ENCODE measurements at regions of chr7 and their contacts with region 1.

Region 1: GRCh38 chr7:111987115-111987826 is 218.9 kb downstream of the DOCK4 start:
- DNase-seq: peak; percentile 83
- H3K4me3 ChIP-seq: peak overlapping the region in 1 of 3 experiments; percentile 45
- H3K27ac ChIP-seq: peak overlapping the region; percentile 89
- H3K4me1 ChIP-seq: peaks cover 30% of the 10 kb centered on the region
- H3K27me3 ChIP-seq: no peaks in the 10 kb centered on the region
- CTCF ChIP-seq: no peak
- POLR2A ChIP-seq: no peak

Region 2: GRCh38 chr7:111903797-111904196 is 83.5 kb before region 1 on chr7:
- CTCF ChIA-PET with region 1: no interaction called
- POLR2A ChIA-PET with region 1: no interaction called
- dilution Hi-C with region 1: no loop called
- intact Hi-C with region 1: no loop called
- DNase-seq: no peak
- H3K4me3 ChIP-seq: no peak overlapping the region
- H3K27ac ChIP-seq: no peak overlapping the region
- H3K4me1 ChIP-seq: no peaks in the 10 kb centered on the region
- H3K27me3 ChIP-seq: no peaks in the 10 kb centered on the region
- CTCF ChIP-seq: no peak
- POLR2A ChIP-seq: no peak

Region 3: GRCh38 chr7:112162142-112163020 is 175.1 kb after region 1 on chr7:
- CTCF ChIA-PET with region 1: no interaction called
- POLR2A ChIA-PET with region 1: no interaction called
- dilution Hi-C with region 1: no loop called
- intact Hi-C with region 1: loop called (anchors 1 kb)
- DNase-seq: peak; percentile 98
- H3K4me3 ChIP-seq: peak overlapping the region in 1 of 3 experiments; percentile 13
- H3K27ac ChIP-seq: peak overlapping the region; percentile 81
- H3K4me1 ChIP-seq: peaks cover 70% of the 10 kb centered on the region
- H3K27me3 ChIP-seq: no peaks in the 10 kb centered on the region
- CTCF ChIP-seq: no peak
- POLR2A ChIP-seq: no peak

Region 4: DNA sequence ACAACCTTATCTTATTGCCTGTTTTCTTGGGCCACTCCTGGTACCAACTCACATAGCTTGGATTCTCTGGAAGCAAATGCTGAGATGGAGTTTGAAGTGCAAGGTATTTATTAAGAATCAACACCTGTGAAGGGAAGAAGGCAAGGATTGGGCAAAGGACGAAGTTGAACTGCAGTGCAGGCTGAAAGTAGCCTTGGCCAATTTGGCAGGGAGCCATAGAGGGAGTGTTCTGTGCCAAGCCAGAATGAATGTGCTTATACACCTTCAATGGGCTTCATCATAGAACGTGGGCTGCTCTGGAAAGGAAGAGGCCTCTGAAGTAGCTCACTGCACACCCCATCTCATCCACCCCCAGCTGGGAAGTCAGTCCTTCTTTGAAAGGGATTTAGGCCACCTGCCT is 383.2 kb after region 1 on chr7:
- CTCF ChIA-PET with region 1: no interaction called
- POLR2A ChIA-PET with region 1: no interaction called
- dilution Hi-C with region 1: no loop called
- intact Hi-C with region 1: no loop called
- DNase-seq: peak; percentile 11
- H3K4me3 ChIP-seq: no peak overlapping the region
- H3K27ac ChIP-seq: no peak overlapping the region
- H3K4me1 ChIP-seq: no peaks in the 10 kb centered on the region
- H3K27me3 ChIP-seq: peaks cover 3 to 6% of the 10 kb centered on the region in 2 experiments
- CTCF ChIP-seq: no peak
- POLR2A ChIP-seq: no peak

Measured in endothelial cell of umbilical vein (primary cell).